ENCODE measurements at regions of chr10 and their contacts with region 1.

Region 1: GRCh38 chr10:73486596-73486995 is 9.2 kb downstream of the PPP3CB start:
- H3K4me3 ChIP-seq: no peak overlapping the region
- H3K27ac ChIP-seq: no peak overlapping the region
- H3K4me1 ChIP-seq: no peaks in the 10 kb centered on the region
- CTCF ChIP-seq: no peak

Region 2: DNA sequence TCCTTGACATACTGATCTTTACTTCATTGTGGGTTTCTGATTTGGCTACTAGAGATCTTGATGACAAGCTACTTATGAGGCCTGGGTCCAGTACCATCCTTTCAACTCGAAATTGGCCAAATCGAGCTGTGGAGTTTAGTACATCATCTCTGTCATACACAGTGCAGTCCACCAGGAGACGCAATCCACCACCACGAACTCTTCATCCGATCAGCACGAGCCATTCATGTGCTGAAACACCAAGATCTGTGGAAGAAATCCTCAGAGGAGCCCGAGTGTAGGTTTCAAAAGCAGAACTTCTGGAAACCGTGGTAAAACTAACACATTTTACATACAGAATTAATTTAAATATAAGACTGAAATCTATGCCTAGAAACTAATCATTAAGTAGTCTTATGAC is 253.7 kb before region 1 on chr10:
- CTCF ChIA-PET with region 1: interaction called, 10 read pairs
- POLR2A ChIA-PET with region 1: no interaction called
- H3K4me3 ChIP-seq: no peak overlapping the region
- H3K27ac ChIP-seq: no peak overlapping the region
- H3K4me1 ChIP-seq: no peaks in the 10 kb centered on the region
- CTCF ChIP-seq: no peak

Region 3: DNA sequence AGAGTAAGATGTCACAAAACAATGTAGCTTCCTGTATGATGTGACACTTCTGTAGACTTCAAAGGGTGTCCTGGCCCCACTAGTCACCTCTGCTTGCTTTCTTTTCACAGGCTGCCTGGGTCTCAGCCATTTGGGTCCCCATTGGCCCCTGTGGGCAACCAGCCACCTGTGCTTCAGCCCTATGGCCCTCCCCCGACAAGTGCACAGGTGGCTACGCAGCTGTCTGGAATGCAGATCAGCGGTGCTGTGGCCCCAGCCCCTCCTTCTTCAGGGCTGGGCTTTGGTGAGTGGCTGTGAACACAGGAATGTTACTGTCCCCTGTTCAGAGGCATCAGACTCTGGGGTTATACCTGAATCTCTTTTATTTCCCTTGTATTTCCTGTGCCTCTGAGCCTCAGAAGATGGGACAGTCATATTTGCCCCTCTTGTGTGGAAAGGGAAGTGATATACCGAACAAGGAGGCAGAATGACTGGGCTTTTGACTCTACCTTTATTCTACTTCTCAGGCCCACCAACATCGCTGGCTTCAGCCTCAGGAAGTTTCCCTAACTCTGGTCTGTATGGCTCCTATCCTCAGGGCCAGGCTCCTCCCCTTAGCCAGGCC is 273.0 kb after region 1 on chr10:
- CTCF ChIA-PET with region 1: no interaction called
- POLR2A ChIA-PET with region 1: no interaction called
- H3K4me3 ChIP-seq: no peak overlapping the region
- H3K27ac ChIP-seq: no peak overlapping the region
- H3K4me1 ChIP-seq: no peaks in the 10 kb centered on the region
- CTCF ChIP-seq: no peak

Region 4: DNA sequence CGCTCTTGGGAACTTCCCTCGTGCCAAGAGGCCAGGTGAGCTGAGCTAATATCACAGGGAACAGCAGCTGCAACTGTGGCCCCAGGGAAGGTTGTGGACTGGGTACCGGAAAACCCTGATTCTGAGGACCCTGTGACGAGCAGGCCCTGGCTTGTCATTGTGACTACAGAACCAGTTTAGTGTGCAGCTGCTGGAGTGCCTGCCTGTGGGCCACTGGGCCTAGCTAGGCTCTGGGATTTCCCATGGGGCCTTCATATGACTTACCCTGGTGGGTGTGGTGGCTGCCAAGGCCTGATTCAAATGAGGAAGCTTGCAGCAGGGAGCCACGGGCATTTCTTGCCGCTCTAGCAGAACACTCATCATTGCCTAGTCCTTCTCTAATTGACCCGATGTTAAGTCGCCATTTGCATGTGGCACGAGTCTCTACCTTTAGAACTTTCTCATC is 402.4 kb after region 1 on chr10:
- CTCF ChIA-PET with region 1: no interaction called
- POLR2A ChIA-PET with region 1: no interaction called
- H3K4me3 ChIP-seq: no peak overlapping the region
- H3K27ac ChIP-seq: no peak overlapping the region
- H3K4me1 ChIP-seq: peaks cover 11% of the 10 kb centered on the region
- CTCF ChIP-seq: no peak